Mammary epithelial cell (primary cell): ENCODE measurements at regions of chr1 and their contacts with region 1.

Region 1: DNA sequence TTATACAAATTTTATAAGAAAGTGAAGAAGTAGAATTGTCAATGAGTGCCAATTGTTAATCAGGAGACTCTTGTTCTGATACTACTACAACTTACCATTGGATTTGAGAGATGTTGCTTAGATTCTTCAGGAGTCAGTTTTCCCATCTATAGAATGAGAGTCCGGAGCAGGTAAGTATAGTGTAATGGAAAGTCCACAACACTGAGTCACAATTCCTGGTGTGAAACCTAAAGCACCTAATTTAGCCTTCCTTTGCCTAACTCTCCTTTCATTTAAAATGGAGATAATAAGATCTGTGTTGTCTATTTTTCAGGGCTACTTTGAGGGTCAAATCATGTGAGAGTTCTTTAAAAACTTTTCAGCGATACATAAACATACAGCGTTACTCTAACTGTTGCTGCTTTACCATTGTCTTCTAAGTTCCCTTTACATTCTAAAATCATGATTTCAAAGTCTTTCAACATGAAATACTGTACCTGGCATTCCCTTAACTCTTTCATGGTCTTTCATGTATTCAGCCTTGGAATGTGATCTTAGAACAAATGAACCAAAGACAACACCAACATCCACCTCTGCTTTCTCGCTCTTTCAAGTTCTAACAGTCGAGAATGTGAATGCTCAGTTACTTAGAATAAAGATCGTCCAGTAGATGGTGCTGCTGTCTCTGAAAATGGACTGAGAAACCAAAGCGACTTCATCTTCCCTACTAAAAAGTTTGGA is 90.9 kb downstream of the SLC30A10 start:
- DNase-seq: peak; percentile 42
- H3K4me3 ChIP-seq: no peak overlapping the region
- H3K27ac ChIP-seq: no peak overlapping the region
- H3K4me1 ChIP-seq: no peaks in the 10 kb centered on the region
- H3K27me3 ChIP-seq: no peaks in the 10 kb centered on the region
- CTCF ChIP-seq: peak; percentile 51 to 64

Region 2: GRCh38 chr1:219959540-219960203 is 122.2 kb after region 1 on chr1:
- CTCF ChIA-PET with region 1: no interaction called
- dilution Hi-C with region 1: no loop called
- in situ Hi-C with region 1: no loop called
- intact Hi-C with region 1: loop called (anchors 10 kb)
- DNase-seq: no peak
- H3K4me3 ChIP-seq: no peak overlapping the region
- H3K27ac ChIP-seq: no peak overlapping the region
- H3K4me1 ChIP-seq: no peaks in the 10 kb centered on the region
- H3K27me3 ChIP-seq: peaks cover 2% of the 10 kb centered on the region
- CTCF ChIP-seq: no peak

Region 3: GRCh38 chr1:220217383-220217988 is 380.1 kb after region 1 on chr1:
- CTCF ChIA-PET with region 1: no interaction called
- dilution Hi-C with region 1: no loop called
- in situ Hi-C with region 1: no loop called
- intact Hi-C with region 1: loop called (anchors 5 kb)
- DNase-seq: no peak
- H3K4me3 ChIP-seq: no peak overlapping the region
- H3K27ac ChIP-seq: no peak overlapping the region
- H3K4me1 ChIP-seq: peaks cover 6% of the 10 kb centered on the region
- H3K27me3 ChIP-seq: no peaks in the 10 kb centered on the region
- CTCF ChIP-seq: peak; percentile 38 to 59